ENCODE measurements at regions of chr12 and their contacts with region 1.

Region 1: DNA sequence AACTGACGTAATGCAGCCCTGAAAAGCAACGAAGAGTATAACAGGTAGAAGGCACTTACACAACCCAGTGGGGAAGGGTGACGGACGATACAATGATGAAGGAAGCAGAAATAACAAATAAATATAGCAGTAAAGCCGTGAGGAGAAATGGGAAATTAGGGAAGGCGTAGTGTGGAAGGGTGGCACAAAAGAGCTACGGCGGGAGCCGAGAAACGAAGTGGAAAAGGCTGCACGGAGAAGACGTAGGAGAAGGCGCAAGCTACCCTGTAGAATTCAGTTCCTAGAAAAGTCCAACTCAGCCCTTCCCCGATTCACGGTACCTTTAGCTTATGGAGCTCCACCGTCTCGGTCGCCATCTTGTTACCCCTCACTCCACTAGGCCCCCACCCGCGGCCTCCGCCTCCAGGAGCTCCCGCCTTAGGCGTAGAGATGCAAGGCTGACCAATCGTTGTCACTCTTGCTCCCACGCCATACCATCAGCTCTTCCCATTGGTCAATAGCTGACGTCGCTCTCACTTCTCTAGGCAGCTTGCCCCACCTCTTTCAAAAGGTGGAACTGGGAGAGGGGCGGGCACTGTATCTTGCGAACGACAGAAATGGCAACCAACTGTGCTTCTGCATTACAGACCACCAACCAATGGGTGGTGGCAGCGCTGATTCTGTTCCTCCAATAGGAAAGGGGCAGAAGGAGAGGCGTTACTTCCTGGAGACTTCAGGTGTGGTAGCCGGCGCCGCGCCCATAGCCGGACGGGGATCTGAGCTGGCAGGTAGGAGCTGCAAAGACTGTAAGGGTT is at the starts of genes ORMDL2 and SARNP:
- DNase-seq: peak; percentile 98
- H3K4me3 Mint-ChIP-seq: no peak within 1 kb of the TSS
- H3K27ac Mint-ChIP-seq: peak within 1 kb of the TSS; percentile 43
- H3K4me1 Mint-ChIP-seq: peaks cover 28% of the 10 kb centered on the region
- H3K27me3 Mint-ChIP-seq: no peaks in the 10 kb centered on the region
- total RNA-seq, gene ORMDL2: 58.6 and 59.2 TPM in 2 replicates
- total RNA-seq, gene SARNP: 78.3 and 82.2 TPM in 2 replicates

Region 2: GRCh38 chr12:54984658-54985376 is 832.7 kb before region 1 on chr12 and contains the start of gene TESPA1:
- intact Hi-C with region 1: loop called (anchors 5 kb)
- DNase-seq: peak; percentile 82
- H3K4me3 Mint-ChIP-seq: peak within 1 kb of the TSS; percentile 92
- H3K27ac Mint-ChIP-seq: peak within 1 kb of the TSS; percentile 89
- H3K4me1 Mint-ChIP-seq: peaks cover 59% of the 10 kb centered on the region
- H3K27me3 Mint-ChIP-seq: no peaks in the 10 kb centered on the region
- total RNA-seq, gene TESPA1: 179 and 186 TPM in 2 replicates

Region 3: GRCh38 chr12:55728939-55729823 is 88.4 kb before region 1 on chr12 and contains the start of gene CD63:
- intact Hi-C with region 1: loop called (anchors 1 kb)
- DNase-seq: peak; percentile 44
- H3K4me3 Mint-ChIP-seq: peak within 1 kb of the TSS; percentile 85
- H3K27ac Mint-ChIP-seq: peak within 1 kb of the TSS; percentile 91
- H3K4me1 Mint-ChIP-seq: peaks cover 29% of the 10 kb centered on the region
- H3K27me3 Mint-ChIP-seq: no peaks in the 10 kb centered on the region
- total RNA-seq, gene CD63: 230 and 236 TPM in 2 replicates

Region 4: DNA sequence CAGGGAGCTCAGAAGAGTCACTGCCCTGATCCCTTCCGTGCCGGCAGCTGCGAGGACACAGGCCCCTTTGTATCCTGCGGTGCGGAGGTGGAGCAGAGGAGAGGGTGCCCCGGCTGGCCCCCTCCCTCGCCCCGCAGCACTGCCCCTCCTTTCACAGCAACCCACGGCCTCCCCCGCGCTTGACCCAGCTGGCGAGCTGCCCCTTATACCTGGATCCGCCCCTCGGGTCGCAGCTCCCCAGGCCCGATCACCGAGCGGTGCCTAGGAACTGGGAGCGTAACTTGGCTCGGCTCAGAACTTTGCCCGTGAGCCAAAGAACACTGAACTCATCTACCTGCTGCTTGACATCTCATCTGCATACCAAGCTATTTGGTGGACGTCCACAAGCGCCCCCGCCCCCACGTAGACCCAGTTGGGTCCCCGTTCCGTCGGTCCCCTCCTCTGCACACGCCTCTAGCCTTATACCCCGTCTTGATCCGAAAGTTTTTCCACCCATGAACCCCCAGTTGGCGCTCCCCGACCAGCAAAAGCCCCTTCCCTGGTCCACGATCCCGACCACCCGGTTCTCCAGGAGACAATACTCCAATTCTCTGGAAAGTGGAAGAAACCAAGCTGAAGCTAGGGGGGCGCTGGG is 12.5 kb after region 1 on chr12:
- intact Hi-C with region 1: loop called (anchors 1 kb)
- DNase-seq: peak; percentile 16
- H3K4me3 Mint-ChIP-seq: peak overlapping the region; percentile 97
- H3K27ac Mint-ChIP-seq: peak overlapping the region; percentile 89
- H3K4me1 Mint-ChIP-seq: peaks cover 36% of the 10 kb centered on the region
- H3K27me3 Mint-ChIP-seq: no peaks in the 10 kb centered on the region

Region 5: DNA sequence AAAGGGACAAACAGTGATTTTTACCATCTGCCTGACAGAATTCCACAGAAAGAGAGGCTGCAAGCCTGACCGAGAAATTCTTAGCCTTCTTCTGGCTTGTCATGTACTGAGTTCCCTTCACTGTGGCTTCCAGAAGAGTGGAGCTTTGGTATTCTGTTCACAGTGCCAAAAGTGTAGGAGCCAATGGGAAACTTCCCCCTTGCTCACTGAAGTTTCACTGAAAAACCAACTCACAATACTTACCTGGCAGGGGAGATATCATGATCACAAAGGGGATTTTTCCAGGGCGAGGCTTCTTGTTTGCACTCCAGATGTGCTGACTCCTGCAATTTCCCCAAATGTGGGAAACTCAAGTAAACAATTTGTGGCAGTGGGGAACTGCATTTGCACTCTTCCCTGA is 56.9 kb after region 1 on chr12:
- intact Hi-C with region 1: no loop called
- DNase-seq: no peak
- H3K4me3 Mint-ChIP-seq: no peak overlapping the region
- H3K27ac Mint-ChIP-seq: no peak overlapping the region
- H3K4me1 Mint-ChIP-seq: no peaks in the 10 kb centered on the region
- H3K27me3 Mint-ChIP-seq: no peaks in the 10 kb centered on the region

Region 6: GRCh38 chr12:55973598-55974307 is 156.2 kb after region 1 on chr12 and contains the start of gene RAB5B:
- intact Hi-C with region 1: loop called (anchors 1 kb)
- DNase-seq: peak; percentile 99
- H3K4me3 Mint-ChIP-seq: no peak within 1 kb of the TSS
- H3K27ac Mint-ChIP-seq: no peak within 1 kb of the TSS
- H3K4me1 Mint-ChIP-seq: peaks cover 26% of the 10 kb centered on the region
- H3K27me3 Mint-ChIP-seq: no peaks in the 10 kb centered on the region
- total RNA-seq, gene RAB5B: 47.9 and 51.0 TPM in 2 replicates